Dorsolateral prefrontal cortex (tissue), 120 donors: ENCODE measurements at regions of chr17 and their contacts with region 1.

Region 1: GRCh38 chr17:58249270-58250133 is 11.1 kb downstream of the LPO start:
- DNase-seq: peak in 9 of 10 donors; percentile 55 to 84 (median 67)
- H3K4me3 ChIP-seq: peak overlapping the region; percentile 42 to 88 (median 67)
- H3K27ac ChIP-seq: peak overlapping the region in 4 of 59 donors; percentile 21 to 57 (median 38)
- H3K27me3 ChIP-seq: peaks cover 0 to 4% (median 0%) of the 10 kb centered on the region in 45 donors
- CTCF ChIP-seq: peak in 55 of 56 donors; percentile 63 to 98 (median 95)

Region 2: GRCh38 chr17:58331815-58332777 is 82.6 kb after region 1 on chr17:
- intact Hi-C with region 1: loop called in 1 of 2 experiments (anchors 5 kb)
- DNase-seq: peak in 1 of 10 donors; percentile 54
- H3K4me3 ChIP-seq: peak overlapping the region in 53 of 59 donors; percentile 1 to 80 (median 41)
- H3K27ac ChIP-seq: peak overlapping the region in 45 of 59 donors; percentile 4 to 88 (median 59)
- H3K27me3 ChIP-seq: peaks cover 0 to 5% (median 0%) of the 10 kb centered on the region in 45 donors
- CTCF ChIP-seq: no peak